Mucosa of descending colon (tissue), 3 donors: ENCODE measurements at regions of chr12 and their contacts with region 1.

Region 1: GRCh38 chr12:52156736-52157565 is 34.9 kb downstream of the KRT80 start:
- DNase-seq: peak; percentile 75 to 88 (median 87)
- ATAC-seq: peak; percentile 54
- H3K4me3 ChIP-seq: no peak overlapping the region
- H3K4me1 ChIP-seq: peaks cover 8% of the 10 kb centered on the region
- CTCF ChIP-seq: peak; percentile 90

Region 2: DNA sequence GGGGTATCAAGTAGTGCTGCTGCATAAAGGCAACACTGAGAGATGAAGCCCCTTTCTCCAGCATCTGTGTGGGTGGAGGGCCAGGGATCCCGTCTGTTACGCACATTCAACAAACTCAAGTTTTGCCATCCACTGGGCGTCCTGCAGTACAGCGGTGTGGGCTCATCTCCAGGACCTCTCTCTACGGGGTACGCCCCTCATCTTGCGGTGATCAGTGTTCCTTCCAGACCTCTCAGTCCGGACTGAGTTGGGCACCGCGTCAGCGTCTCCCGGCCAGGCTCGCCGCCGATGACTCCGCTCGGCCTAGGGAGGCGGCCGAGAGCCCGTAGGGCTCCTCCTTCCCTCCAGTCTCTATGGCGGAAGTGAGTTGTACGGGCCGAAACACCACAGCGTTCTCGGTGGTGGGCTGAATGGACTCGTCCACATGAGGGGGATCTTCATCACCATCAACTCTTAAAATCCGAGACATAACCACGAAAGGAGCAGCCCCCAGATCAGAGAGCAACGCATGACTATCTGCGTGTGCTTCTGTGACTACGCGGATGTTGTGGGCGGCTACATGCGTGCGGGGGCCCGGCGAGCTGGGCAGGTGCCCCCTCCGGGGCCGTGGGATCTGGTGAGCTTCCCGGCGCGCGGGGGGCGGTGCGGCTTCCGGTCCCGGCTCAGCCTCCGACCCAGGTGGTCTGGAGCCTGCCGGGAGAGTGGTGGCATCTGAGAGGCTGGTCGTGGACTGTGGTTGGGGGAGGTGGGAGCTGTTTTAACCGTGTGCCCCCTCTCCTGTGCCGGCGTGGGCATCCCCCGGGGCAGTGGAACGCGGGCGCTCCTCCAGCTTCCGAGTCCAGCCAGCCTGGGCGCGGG is 87.4 kb before region 1 on chr12 and contains the start of gene ATG101:
- intact Hi-C with region 1: no loop called
- DNase-seq: peak; percentile 86 to 92 (median 89)
- ATAC-seq: peak; percentile 99
- H3K4me3 ChIP-seq: peak within 1 kb of the TSS; percentile 84
- H3K4me1 ChIP-seq: peaks cover 15% of the 10 kb centered on the region
- CTCF ChIP-seq: peak; percentile 58
- total RNA-seq, gene ATG101: 30.1 to 37.5 (median 33.0) TPM

Region 3: GRCh38 chr12:52213512-52214420 is 56.8 kb after region 1 on chr12:
- intact Hi-C with region 1: loop called in 1 of 2 experiments (anchors 5 kb)
- DNase-seq: peak; percentile 79 to 91 (median 83)
- ATAC-seq: peak; percentile 91
- H3K4me3 ChIP-seq: no peak overlapping the region
- H3K4me1 ChIP-seq: peaks cover 12% of the 10 kb centered on the region
- CTCF ChIP-seq: peak; percentile 94

Region 4: GRCh38 chr12:52327052-52327829 is 170.3 kb after region 1 on chr12:
- intact Hi-C with region 1: loop called in 1 of 2 experiments (anchors 5 kb)
- DNase-seq: peak in 2 of 3 donors; percentile 79 to 94
- ATAC-seq: peak; percentile 99
- H3K4me3 ChIP-seq: no peak overlapping the region
- H3K4me1 ChIP-seq: no peaks in the 10 kb centered on the region
- CTCF ChIP-seq: peak; percentile 63

Region 5: DNA sequence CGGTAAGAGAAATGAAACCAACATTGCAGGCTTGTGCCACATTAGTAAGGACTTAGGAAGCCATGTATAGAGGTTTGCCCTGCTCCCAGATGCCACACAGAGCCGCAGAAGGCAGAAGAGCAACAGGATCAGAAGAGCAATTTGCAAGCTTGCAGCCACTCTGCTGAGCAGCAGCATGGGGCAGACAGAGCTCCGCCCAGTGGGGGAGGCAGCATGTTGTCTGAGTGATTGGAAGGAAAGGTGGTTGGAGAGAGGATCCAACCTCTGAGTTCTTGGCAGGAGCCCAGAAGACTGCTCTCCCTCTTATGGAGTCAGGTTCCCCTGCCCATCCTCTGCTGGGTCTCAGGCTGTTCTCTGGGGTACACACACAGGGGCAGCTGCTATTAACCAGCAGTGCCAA is 338.4 kb after region 1 on chr12:
- intact Hi-C with region 1: no loop called
- DNase-seq: peak in 1 of 3 donors; percentile 16
- ATAC-seq: peak; percentile 10
- H3K4me3 ChIP-seq: no peak overlapping the region
- H3K4me1 ChIP-seq: no peaks in the 10 kb centered on the region
- CTCF ChIP-seq: no peak